ENCODE measurements at regions of chr18 and their contacts with region 1.

Region 1: DNA sequence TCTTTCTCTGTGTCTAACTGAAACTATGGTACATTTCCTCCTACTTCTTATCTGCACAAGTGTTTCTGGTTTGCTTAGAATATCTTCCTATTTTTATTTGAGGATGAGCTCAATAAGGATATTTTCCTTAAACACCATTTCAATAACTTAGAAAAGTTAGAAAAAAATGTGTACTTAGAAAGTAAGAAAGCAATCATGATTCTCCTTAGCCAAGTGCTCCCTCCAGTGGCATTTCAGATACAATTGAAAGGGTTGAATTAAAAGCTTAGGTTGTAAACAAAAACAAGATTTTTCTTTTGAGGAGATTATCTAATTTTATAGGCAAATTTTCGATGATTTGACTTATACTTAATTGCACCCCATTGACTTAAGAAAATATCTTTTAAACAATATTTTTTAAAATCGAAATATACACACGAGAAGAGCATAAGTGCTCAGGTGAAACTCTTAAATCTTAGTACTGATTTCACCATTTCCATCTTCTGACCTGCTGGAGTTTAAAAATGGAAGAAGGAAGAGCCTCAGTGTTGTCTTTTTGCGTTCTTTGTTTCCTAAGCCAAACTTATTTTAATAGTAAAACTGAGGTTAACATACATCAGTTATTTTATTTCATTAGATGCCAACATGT is 26.9 kb downstream of the C18orf63 start:
- DNase-seq: peak in 19 of 42 donors; percentile 19 to 72 (median 55)

Region 2: GRCh38 chr18:74196220-74197119 is 146.1 kb before region 1 on chr18:
- intact Hi-C with region 1: loop called (anchors 2 kb)
- DNase-seq: peak in 37 of 42 donors; percentile 19 to 80 (median 48)

Region 3: DNA sequence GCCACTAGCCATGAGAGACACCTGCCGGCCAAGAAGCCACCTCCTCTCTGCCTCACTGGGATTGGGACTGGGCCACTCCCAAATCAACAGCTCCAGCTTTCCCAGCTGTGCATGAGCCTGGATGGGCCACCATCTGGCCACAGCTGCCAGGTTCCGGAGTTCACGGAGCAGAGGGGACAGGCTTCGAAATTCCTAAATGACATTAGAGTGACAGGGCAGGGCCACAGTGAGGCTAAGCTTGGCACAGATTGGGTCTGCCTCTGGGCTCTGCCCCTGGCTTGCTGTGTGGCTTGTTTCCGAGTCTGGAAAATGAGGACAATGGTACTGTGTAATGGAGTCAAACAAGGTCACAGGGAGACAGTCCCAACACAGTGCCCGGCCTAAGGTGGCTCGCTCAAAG is 108.1 kb after region 1 on chr18:
- intact Hi-C with region 1: no loop called
- DNase-seq: peak in 40 of 42 donors; percentile 20 to 87 (median 67)